Cardiac septum (tissue), 1 donor: ENCODE measurements at regions of chr20 and their contacts with region 1.

Region 1: GRCh38 chr20:6074145-6074561 is 20.3 kb upstream of the LRRN4 start:
- DNase-seq: no peak

Region 2: GRCh38 chr20:5529331-5530148 is 544.6 kb before region 1 on chr20:
- intact Hi-C with region 1: loop called (anchors 2 kb)
- DNase-seq: peak; percentile 93

Region 3: GRCh38 chr20:5596401-5597193 is 477.6 kb before region 1 on chr20:
- intact Hi-C with region 1: no loop called
- DNase-seq: no peak

Region 4: DNA sequence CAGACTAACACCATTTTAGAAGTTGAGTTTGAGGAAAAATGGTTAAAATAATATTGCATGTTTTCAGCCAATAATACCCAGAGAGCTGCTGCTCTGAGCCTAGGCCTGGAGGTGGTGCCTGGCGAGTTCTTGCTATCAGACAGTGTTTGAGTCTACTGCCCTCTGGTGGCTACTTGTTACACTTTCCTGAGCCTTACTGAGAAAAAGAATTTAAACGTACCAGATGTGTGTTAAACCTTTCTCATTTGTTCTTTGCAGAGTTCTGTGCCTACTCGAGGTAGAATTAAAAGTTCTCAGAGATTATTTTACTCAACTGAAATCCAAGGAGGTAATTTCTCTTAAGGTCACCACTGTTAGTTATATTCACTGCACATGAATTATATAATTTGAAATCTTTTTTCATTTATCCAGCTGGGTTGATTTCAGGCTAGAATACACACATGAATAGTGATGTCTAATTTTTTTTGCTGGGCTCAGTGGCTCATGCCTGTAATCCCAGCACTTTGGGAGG is 285.7 kb before region 1 on chr20:
- intact Hi-C with region 1: loop called (anchors 10 kb)
- DNase-seq: peak; percentile 82

Region 5: DNA sequence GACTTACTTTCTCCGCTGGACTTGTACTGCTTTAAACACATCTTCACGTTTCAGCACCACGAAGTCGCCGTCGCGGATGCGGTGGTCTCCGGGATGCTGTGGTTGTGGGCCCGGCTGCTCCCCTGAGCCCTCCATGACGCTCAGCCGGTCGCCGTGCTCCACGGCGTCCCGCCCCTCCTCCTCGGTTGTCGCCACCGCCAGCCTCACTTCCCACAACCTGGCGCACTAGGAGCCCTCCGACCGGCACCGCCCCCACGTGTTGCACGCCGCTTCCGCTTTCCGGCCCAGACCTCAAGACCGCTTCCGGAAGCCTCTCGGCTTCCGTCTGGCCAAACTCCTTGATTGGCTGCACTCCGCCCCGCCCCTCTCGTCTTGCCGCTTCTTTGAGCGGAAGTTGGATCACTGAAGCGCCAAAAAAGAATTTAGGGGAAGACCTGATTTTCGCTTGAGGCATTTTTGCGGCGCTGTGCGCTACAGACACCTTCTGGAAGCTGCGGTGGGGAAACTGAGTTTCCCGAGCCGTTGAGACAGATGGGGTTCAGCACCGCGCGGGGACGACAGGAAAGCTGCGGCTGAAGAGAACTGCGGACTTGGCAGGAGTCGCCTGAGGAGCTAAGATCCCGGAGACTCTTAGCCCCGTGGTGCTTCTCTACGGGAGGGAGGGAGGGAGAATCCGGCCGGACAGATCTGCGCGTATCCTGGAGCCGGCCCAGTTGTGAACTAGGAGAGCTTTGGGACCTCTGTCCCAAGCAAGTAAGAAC is 123.7 kb before region 1 on chr20 and contains the starts of genes MCM8 and TRMT6:
- intact Hi-C with region 1: loop called (anchors 5 kb)
- DNase-seq: peak; percentile 98
- total RNA-seq, gene MCM8: 6.1 TPM
- total RNA-seq, gene TRMT6: 13.5 TPM

Region 6: DNA sequence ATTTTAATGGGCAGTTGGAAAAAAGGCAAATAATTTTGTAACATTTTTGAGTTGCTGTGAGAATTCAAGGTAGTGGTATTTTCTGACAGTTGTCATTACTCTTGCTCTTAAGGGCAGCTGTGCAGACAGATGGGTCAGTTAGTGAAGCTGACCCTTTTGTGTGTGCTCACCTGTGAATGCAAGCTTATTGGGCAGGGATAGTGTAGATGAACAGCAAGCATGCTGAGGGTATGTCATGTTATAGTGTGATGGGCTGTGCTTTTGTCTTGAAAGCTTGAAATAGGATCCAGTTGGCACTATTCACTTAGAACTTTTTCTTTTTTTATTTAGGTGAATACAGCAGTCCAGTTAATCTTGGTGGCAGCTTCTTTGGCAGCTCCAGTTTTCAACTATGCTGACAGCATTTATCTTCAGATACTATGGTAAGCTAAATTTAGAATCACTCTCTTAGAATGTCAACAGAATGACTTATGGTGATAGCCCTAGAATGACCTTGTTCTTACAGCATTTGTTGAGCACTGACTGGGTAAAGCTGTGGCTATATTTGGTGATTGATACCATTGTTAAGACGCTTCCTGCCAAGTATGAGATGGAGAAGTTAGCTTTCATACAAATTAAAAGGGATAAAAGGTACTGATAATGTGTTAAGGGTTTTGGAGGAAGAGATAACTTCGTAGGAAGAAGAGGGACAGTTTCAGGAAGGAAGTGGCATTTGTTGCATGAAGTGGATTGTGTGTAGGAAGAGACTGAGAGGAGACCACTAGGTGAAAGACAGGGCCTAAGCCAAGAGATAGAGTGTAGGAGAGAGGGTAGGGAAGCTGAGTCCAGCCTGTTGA is 39.8 kb before region 1 on chr20:
- intact Hi-C with region 1: loop called (anchors 2 kb)
- DNase-seq: no peak

Region 7: DNA sequence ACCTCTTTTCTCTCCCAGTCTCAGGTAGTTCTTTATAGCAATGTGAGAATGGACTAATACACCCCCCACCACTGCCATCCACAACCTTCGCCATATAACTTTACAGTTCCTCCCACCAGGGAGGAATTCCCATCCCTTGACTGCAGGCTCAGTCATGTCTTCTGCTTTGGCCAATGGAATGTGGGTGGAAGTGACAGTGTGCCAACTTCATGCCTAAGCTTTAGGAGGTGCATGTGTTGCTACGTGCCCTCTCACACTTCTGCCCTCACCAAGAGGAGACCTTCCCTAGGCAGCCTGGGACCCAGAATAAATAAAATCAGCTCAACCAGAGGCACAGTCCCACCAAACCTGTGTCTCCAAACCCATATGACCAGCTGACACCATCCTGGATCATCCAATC is 12.7 kb after region 1 on chr20:
- intact Hi-C with region 1: no loop called
- DNase-seq: no peak